Aorta (tissue), 5 donors: ENCODE measurements at regions of chr16 and their contacts with region 1.

Region 1: GRCh38 chr16:31073968-31074813 is at the starts of genes ZNF646 and ZNF668:
- DNase-seq: peak; percentile 99
- ATAC-seq: peak; percentile 96
- H3K4me3 ChIP-seq: peak within 1 kb of the TSS; percentile 84 to 97
- H3K27ac ChIP-seq: peak within 1 kb of the TSS; percentile 20 to 97
- H3K4me1 ChIP-seq: peaks cover 0 to 3% of the 10 kb centered on the region in 2 donors
- H3K27me3 ChIP-seq: no peaks in the 10 kb centered on the region
- total RNA-seq, gene ZNF646: 12.6 to 15.0 TPM
- total RNA-seq, gene ZNF668: 7.4 to 10.3 TPM

Region 2: GRCh38 chr16:30650369-30651123 is 423.6 kb before region 1 on chr16 and contains the start of gene PRR14:
- intact Hi-C with region 1: no loop called
- DNase-seq: peak; percentile 100
- ATAC-seq: peak; percentile 96
- H3K4me3 ChIP-seq: peak within 1 kb of the TSS; percentile 24 to 82
- H3K27ac ChIP-seq: peak within 1 kb of the TSS; percentile 58 to 88
- H3K4me1 ChIP-seq: no peaks in the 10 kb centered on the region
- H3K27me3 ChIP-seq: no peaks in the 10 kb centered on the region
- total RNA-seq, gene PRR14: 50.5 to 53.4 TPM

Region 3: GRCh38 chr16:30957456-30958174 is 116.6 kb before region 1 on chr16 and contains the start of gene SETD1A:
- intact Hi-C with region 1: loop called in 1 of 2 experiments (anchors 10 kb)
- DNase-seq: peak; percentile 98 to 99
- ATAC-seq: peak; percentile 97
- H3K4me3 ChIP-seq: peak within 1 kb of the TSS; percentile 68 to 97
- H3K27ac ChIP-seq: peak within 1 kb of the TSS; percentile 46 to 92
- H3K4me1 ChIP-seq: no peaks in the 10 kb centered on the region
- H3K27me3 ChIP-seq: no peaks in the 10 kb centered on the region
- total RNA-seq, gene SETD1A: 16.4 to 19.7 TPM

Region 4: DNA sequence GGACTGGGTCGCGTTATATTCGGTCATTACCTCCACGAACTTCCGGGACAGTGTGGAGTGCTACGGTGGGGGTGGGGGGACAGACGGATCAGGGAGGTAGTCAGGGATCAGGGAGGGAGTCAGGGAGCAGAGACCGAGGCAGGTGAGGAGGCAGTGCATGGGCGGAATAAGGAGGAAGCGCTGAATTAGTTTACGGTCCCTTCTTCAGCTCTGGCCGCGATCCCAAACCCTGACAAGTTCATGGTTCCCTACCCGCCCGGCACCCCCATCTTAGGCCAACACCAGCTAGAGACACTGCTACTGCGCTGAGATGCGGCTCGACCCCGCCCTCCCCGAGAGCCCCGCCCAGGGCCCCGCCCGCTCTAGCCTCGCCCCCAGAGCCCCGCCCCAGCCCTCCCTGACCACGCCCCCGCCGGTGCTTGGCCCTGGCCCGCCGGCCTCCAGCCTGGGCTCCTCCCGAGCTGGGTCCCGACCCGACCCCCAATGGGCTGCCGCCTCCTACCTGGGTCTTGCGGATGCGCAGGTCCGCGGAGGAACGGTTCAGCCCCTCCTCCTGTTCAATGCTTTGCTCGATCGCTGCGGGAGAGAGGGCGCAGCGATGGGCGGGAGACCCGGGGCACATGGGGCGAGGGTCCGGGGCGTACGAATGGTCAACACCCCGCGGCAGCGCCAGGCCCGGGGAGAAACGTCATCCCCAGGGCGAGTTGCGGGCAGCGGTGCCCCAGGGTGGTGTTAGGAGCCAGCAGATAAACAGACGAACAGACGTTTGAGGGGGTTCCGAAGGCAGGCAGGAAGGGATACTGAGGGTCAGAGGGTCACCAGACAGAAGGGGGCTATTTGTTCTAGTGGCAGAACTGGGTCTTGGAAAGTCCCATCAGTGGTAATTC is 76.9 kb before region 1 on chr16:
- intact Hi-C with region 1: loop called in 1 of 2 experiments (anchors 5 kb)
- DNase-seq: peak; percentile 89 to 96
- ATAC-seq: peak; percentile 93
- H3K4me3 ChIP-seq: peak overlapping the region; percentile 29 to 47
- H3K27ac ChIP-seq: peak overlapping the region; percentile 30 to 69
- H3K4me1 ChIP-seq: no peaks in the 10 kb centered on the region
- H3K27me3 ChIP-seq: no peaks in the 10 kb centered on the region

Region 5: DNA sequence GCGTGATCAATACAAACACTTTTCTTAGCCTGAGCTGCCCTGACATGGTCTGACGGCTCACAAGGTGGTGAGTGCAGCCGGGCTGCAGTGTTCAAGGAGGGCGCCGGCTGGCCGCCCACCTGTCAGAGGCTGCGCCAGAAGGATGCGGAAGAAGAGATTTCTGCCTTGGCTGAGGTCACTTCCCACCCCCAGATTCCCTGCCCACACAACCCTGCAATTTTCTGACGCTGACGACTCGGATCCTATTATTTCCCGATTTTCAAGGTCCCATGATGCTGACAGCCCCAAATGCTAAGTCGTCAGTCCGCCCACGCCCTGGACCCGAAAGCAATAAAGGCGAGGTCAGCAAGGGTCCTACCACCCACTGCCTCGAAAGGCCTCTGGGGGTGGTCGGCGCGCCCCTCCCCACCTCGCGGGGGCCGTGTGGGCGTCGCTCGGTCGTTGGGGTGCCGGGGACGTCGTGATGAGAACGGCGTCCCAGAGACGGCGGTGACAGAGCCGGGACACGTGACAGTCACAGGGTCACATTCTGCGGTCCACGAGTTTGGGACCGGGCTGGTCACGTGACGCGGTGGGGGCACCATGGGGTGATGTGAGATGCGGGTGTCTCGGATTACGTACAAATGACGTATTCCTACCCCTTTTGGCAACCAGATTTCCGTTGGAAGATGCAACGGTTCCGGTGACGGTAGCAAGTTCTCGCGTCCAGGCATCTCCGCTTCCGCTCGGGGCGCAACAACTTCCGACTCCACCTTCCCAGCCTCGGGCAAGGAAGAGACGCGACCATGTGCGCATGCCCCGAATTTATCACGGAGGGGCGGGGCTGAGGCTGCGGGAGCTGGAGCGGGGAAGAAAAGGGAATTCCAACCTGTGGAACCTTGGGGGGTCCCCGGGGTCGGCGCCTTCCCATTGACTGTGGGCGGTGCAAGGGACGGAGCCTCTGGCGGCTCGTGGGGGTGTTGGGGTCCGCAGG is 41.2 kb before region 1 on chr16 and contains the start of gene STX4:
- intact Hi-C with region 1: loop called (anchors 2 to 5 kb)
- DNase-seq: peak; percentile 99 to 100
- ATAC-seq: peak; percentile 96
- H3K4me3 ChIP-seq: peak within 1 kb of the TSS; percentile 76 to 89
- H3K27ac ChIP-seq: peak within 1 kb of the TSS; percentile 6 to 83
- H3K4me1 ChIP-seq: peaks cover 0 to 1% of the 10 kb centered on the region in 2 donors
- H3K27me3 ChIP-seq: no peaks in the 10 kb centered on the region
- total RNA-seq, gene STX4: 73.5 to 88.6 TPM

Region 6: DNA sequence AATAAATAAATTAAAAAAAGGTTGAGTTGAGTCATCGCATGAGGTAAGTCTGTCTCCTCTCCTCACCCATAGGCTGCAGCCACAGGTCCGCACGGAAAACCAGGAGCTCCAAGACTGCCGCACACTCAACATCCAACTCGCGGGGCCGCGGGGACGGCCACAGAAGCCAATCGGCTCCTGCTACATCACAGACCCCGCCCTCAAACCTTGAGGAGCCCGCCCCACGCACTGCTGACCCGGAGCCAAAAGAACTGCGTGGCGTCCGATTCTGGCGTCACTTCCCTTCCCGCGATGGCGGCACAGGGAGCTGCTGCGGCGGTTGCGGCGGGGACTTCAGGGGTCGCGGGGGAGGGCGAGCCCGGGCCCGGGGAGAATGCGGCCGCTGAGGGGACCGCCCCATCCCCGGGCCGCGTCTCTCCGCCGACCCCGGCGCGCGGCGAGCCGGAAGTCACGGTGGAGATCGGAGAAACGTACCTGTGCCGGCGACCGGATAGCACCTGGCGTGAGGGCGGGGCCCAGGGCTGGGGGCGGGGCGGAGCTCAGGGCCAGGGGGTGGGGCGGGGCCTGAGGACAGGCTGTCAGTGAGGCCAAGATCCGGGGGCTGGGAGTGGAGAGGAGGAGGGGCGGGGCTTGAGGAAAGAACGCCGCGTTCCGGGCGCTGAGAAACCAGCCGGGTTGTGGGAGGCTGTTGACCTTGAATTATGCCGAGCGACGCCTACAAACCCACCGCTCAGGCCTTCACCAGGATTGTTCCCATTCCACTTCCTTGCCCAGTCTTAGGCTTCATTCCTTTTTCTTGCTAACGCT is 43.4 kb after region 1 on chr16 and contains the start of gene KAT8:
- intact Hi-C with region 1: loop called in 1 of 2 experiments (anchors 1 kb)
- DNase-seq: peak; percentile 99
- ATAC-seq: peak; percentile 97
- H3K4me3 ChIP-seq: peak within 1 kb of the TSS; percentile 63 to 94
- H3K27ac ChIP-seq: peak within 1 kb of the TSS; percentile 84 to 94
- H3K4me1 ChIP-seq: peaks cover 0 to 4% of the 10 kb centered on the region in 2 donors
- H3K27me3 ChIP-seq: no peaks in the 10 kb centered on the region
- total RNA-seq, gene KAT8: 51.6 to 61.1 TPM

Region 7: GRCh38 chr16:31458844-31459721 is 384.9 kb after region 1 on chr16 and contains the start of gene ARMC5:
- intact Hi-C with region 1: loop called in 1 of 2 experiments (anchors 5 kb)
- DNase-seq: peak; percentile 99
- ATAC-seq: peak; percentile 94
- H3K4me3 ChIP-seq: peak within 1 kb of the TSS; percentile 51 to 52
- H3K27ac ChIP-seq: peak within 1 kb of the TSS; percentile 23 to 95
- H3K4me1 ChIP-seq: no peaks in the 10 kb centered on the region
- H3K27me3 ChIP-seq: no peaks in the 10 kb centered on the region
- total RNA-seq, gene ARMC5: 7.9 to 9.7 TPM